H1 (cell line): ENCODE measurements at regions of chr7 and their contacts with region 1.

Region 1: GRCh38 chr7:87173471-87173870 is 21.2 kb downstream of the DMTF1 start:
- DNase-seq: no peak
- H3K4me3 ChIP-seq: no peak overlapping the region
- H3K27ac ChIP-seq: no peak overlapping the region
- H3K4me1 ChIP-seq: no peaks in the 10 kb centered on the region
- H3K27me3 ChIP-seq: no peaks in the 10 kb centered on the region
- CTCF ChIP-seq: no peak
- EP300 ChIP-seq: no peak
- POLR2A ChIP-seq: no peak
- RAD21 ChIP-seq: no peak

Region 2: GRCh38 chr7:87188930-87189329 is 15.5 kb after region 1 on chr7:
- CTCF ChIA-PET with region 1: interaction called, 18 read pairs
- POLR2A ChIA-PET with region 1: interaction called, 9 read pairs
- DNase-seq: no peak
- H3K4me3 ChIP-seq: no peak overlapping the region
- H3K27ac ChIP-seq: no peak overlapping the region
- H3K4me1 ChIP-seq: no peaks in the 10 kb centered on the region
- H3K27me3 ChIP-seq: no peaks in the 10 kb centered on the region
- CTCF ChIP-seq: no peak
- EP300 ChIP-seq: no peak
- POLR2A ChIP-seq: no peak
- RAD21 ChIP-seq: no peak

Region 3: DNA sequence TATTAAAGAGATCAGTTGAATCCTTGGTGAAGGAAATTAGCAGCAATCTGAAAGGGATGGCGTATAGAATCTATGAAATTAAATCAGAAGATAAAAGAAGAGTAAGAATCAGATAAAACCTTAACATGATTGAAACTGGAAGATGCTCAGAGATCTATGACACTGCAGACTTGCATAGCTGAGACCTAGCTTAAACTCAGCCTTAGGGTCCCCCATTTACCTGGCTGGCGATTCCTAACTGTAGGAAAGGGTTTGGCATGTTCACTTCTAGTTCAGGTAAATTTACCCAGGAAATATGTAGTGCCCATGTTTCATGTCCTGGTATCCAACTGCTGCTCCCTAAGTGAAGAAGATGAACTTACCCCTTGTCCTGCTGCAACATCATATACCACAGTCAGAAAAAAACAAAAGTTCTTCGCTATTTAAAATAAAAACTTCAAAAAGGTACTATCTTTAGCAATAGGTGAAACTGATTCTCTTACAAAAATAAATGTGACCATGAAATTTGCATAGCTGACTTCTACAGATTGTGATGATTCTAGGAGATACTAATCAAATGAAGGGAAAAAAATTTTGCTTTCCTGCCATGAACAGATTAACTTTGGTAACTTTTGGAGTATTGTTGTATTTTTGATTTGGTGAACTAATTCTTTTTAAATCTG is 93.9 kb after region 1 on chr7:
- CTCF ChIA-PET with region 1: no interaction called
- POLR2A ChIA-PET with region 1: no interaction called
- DNase-seq: no peak
- H3K4me3 ChIP-seq: no peak overlapping the region
- H3K27ac ChIP-seq: no peak overlapping the region
- H3K4me1 ChIP-seq: no peaks in the 10 kb centered on the region
- H3K27me3 ChIP-seq: no peaks in the 10 kb centered on the region
- CTCF ChIP-seq: no peak
- EP300 ChIP-seq: no peak
- POLR2A ChIP-seq: no peak
- RAD21 ChIP-seq: no peak